ENCODE measurements at regions of chr16 and their contacts with region 1.

Region 1: DNA sequence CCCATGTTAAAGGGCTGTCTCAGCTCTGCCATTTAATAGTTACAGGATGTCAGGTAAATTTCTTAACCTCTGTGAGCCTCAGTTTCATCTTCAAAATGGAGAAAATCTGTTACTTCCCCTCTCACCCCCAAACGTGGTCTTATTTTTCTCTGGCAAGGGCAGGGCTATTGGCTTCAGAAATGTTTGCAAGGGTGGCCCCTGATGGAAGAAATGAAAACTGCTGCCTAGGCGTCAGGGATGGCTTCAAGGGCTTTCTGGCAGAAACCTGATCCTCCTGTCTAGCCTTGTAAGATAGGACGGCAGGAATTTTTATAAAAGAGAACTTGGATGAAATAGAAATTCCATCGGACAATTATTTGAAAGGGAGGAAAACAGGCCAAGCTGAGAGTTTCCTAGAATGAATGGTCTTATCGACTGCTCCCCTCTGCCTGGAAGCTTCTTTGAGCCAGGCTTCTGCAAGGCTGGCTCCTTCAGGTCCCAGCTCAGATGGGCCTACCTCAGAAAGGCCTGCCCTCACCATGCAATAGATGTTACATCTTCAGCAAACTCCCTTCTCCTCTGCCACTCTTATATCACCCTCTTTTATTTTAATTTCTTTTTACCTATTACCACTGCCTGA is 43.0 kb upstream of the TANGO6 start:
- DNase-seq: peak in 8 of 10 donors; percentile 13 to 73 (median 50)
- H3K4me3 ChIP-seq: no peak overlapping the region
- H3K27ac ChIP-seq: peak overlapping the region in 34 of 59 donors; percentile 13 to 81 (median 51)
- H3K27me3 ChIP-seq: no peaks in the 10 kb centered on the region
- CTCF ChIP-seq: peak; percentile 25 to 92 (median 72)

Region 2: DNA sequence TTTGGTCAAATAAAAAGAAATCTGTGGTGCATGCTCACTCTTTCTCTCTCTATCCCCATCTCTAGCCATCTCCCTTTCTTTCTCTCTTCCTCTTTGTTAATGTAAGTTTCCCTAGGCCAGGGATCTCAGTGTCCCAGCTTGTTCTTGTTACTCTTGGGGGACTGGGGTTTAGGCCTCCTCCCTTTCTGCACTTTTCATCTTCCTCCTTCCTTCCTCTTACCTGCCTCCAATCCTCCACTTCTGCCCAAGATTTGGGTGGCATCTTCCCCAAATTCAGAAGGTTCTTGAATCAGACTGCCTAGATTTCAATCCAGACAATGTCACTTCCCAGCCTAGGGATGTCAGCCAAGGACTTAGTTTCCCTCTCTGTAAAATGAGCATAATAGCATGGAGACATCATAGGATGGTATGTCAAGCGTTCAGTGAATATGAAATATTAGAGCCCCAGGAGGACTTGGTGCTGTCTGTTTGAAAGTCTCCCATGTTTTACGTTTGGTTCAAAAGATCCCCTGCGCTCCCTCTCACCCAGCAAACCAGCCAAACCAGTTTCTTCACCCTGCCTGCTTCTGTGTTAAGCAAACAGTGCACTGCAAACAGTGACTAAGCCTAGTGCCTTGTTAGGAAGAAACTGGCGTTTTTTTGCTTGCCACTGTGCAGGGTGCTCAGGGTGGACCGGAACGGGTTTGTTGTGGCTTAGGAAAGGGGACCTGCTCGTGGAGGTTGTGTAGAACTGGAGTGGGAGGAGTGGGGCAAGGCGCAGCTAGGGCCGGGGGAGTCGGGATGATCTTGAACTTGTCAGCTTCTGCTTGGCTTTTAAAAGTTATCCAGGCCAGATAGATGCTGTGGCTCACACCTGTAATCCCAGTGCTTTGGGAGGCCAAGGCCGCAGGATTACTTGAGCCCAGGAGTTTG is 55.7 kb before region 1 on chr16:
- intact Hi-C with region 1: loop called in 1 of 2 experiments (anchors 5 kb)
- DNase-seq: no peak
- H3K4me3 ChIP-seq: no peak overlapping the region
- H3K27ac ChIP-seq: peak overlapping the region in 34 of 59 donors; percentile 13 to 73 (median 44)
- H3K27me3 ChIP-seq: no peaks in the 10 kb centered on the region
- CTCF ChIP-seq: no peak

Region 3: DNA sequence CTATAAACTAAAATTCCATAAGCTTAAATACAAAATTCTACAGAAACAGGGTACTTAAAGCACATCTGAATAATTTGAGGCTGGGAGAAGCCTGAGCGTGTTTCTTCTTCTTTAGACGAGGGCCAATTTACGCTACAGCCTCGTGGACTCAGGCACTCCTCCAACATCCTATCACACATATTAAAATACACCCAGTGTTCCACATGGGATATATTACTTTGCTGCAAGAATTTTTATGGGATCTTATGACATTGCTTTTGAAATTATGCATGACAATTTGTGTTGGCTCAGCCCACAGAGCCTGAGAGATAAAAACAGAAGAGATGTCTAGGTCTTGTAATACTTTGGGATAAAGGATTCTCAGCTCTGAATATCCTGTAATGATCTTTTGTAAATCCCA is 39.5 kb after region 1 on chr16:
- intact Hi-C with region 1: no loop called
- DNase-seq: no peak
- H3K4me3 ChIP-seq: no peak overlapping the region
- H3K27ac ChIP-seq: no peak overlapping the region
- H3K27me3 ChIP-seq: no peaks in the 10 kb centered on the region
- CTCF ChIP-seq: no peak

Measured in dorsolateral prefrontal cortex (tissue), 120 donors.